ENCODE measurements at regions of chr11 and their contacts with region 1.

Region 1: DNA sequence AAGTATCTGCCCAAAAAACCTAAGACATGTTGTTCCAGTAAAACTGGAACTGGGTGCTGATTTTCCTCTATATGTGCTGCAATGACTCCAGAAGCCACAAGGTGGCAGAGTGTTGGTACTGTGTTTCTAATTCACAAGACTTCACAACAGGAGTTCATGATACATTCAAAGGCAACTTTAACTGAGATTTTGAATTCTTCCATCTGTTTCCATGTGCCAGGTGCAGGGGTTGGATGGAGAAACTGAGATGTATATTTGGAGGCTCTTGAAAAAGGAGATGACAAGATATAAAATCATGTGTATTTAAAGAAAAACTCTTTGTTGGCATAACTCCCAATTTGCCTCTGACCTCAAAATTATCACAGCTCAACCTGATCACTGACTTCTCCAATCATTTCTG is 1098.6 kb upstream of the CCDC90B start:
- DNase-seq: no peak
- H3K4me3 ChIP-seq: no peak overlapping the region
- H3K27ac ChIP-seq: no peak overlapping the region
- H3K4me1 ChIP-seq: no peaks in the 10 kb centered on the region
- H3K27me3 ChIP-seq: no peaks in the 10 kb centered on the region
- CTCF ChIP-seq: peak; percentile 56 to 69 (median 60)

Region 2: GRCh38 chr11:83836883-83837654 is 547.7 kb before region 1 on chr11:
- dilution Hi-C with region 1: loop called (anchors 10 kb)
- DNase-seq: no peak
- H3K4me3 ChIP-seq: no peak overlapping the region
- H3K27ac ChIP-seq: no peak overlapping the region
- H3K4me1 ChIP-seq: no peaks in the 10 kb centered on the region
- H3K27me3 ChIP-seq: no peaks in the 10 kb centered on the region
- CTCF ChIP-seq: peak; percentile 85 to 96 (median 86)

Region 3: DNA sequence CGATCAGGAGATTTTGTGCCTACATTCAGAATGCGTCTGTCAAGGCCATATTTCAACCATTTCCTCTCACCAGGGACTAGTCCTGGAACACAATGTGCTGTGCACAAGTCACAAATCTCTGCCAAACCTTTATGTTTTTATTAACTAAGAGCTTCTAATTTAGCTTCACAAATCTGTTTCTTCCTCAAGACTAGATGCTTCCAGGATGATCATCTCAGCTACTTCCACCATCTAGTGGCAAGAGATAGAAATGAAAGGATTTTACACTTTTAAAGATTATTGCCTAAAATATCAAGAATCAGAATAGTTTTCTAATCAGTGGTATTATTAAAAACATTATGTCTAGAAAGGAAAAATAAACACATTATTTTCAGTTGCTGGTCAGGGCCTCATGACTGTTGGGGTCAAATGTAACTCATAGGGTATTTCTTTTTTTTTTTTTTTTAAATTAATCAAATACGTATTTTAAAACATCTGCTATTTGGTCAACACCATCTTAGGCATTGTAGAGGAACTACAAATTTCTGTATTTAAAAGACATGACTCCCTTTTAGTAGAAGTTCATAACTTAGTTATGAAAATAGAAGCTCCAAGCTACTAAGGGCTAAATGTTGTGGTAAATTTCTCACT is 139.8 kb after region 1 on chr11:
- dilution Hi-C with region 1: loop called (anchors 25 kb)
- DNase-seq: no peak
- H3K4me3 ChIP-seq: no peak overlapping the region
- H3K27ac ChIP-seq: no peak overlapping the region
- H3K4me1 ChIP-seq: no peaks in the 10 kb centered on the region
- H3K27me3 ChIP-seq: peaks cover 3% of the 10 kb centered on the region
- CTCF ChIP-seq: peak in 2 of 3 experiments; percentile 39 to 40

Measured in keratinocyte (primary cell).